HCT116 (cell line): ENCODE measurements at regions of chr14 and their contacts with region 1.

Region 1: DNA sequence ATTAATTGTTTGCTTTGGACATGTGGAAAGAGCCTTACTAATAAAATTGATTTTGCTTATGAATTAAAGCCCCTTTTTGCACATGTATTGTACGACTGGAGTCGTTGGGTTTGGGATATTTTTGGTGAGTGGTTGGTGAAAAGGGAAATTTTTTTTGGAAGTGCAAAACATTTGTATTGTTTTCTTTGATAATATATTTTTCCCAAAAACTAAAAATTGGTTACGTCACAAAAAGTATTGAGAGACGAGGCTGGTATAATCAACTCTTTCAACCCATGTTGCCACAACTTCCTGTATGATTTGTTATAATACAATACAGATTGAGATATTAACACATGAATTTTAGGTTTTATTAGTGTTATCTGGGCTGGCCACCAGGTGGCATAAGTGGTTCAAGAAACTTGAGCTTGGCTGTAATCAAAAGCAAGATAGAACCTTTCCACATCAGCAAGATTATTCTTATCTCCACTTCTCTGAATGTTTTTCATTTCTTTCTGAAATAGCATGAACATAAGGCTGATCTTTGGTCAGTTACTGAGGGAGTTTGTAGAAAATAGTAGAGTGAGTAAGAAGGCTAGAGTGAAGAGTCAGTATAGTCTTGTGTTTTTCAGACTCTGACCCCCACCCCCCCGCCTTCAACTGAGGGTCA is 8.7 kb downstream of the NGDN start:
- DNase-seq: peak; percentile 51
- ATAC-seq: peak; percentile 71
- H3K4me3 ChIP-seq: no peak overlapping the region
- H3K27ac ChIP-seq: no peak overlapping the region
- H3K4me1 ChIP-seq: no peaks in the 10 kb centered on the region
- H3K27me3 ChIP-seq: no peaks in the 10 kb centered on the region
- CTCF ChIP-seq: peak; percentile 63 to 80 (median 66)
- POLR2A ChIP-seq: no peak
- RAD21 ChIP-seq: peak; percentile 76

Region 2: DNA sequence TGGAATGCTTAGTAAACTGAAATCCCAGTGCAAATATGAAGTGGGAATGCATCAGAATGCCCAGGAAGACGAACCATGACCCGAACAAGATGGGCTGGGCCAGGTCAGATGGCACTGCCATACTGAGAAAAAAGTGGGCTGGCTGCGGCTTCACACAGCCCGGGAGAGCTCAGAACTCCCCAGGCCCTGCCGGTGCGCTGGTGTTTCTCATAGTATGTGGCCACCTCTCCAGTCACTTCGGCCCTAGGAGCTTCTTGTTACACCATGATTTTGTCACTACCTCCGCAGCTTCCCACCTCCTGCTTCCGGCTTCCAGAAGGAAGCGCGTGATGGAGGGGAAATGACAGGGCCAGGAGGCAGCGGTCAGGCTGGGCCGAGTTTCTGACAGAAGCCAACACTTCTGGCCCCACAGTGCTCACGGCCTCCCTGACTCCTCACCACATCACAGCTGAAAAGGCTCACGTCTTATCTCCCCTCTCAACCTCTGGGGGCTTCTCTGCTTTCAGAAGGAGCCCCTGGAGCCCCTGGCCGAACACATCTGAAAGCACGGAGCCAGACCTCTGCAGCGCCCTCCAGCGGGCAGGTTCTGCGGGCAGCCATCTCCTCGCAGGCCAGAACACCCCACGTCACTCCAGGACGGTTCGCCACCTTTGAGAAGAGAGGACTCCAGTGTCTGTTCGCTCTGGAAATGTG is 919.9 kb before region 1 on chr14:
- CTCF ChIA-PET with region 1: no interaction called
- POLR2A ChIA-PET with region 1: no interaction called
- RAD21 ChIA-PET with region 1: no interaction called
- intact Hi-C with region 1: no loop called
- DNase-seq: no peak
- ATAC-seq: no peak
- H3K4me3 ChIP-seq: no peak overlapping the region
- H3K27ac ChIP-seq: no peak overlapping the region
- H3K4me1 ChIP-seq: peaks cover 5 to 24% of the 10 kb centered on the region in 2 experiments
- H3K27me3 ChIP-seq: no peaks in the 10 kb centered on the region
- CTCF ChIP-seq: no peak
- POLR2A ChIP-seq: no peak
- RAD21 ChIP-seq: no peak

Region 3: GRCh38 chr14:23539248-23540140 is 61.3 kb after region 1 on chr14:
- CTCF ChIA-PET with region 1: interaction called, 5 read pairs
- POLR2A ChIA-PET with region 1: no interaction called
- RAD21 ChIA-PET with region 1: no interaction called
- intact Hi-C with region 1: loop called (anchors 5 kb)
- DNase-seq: peak; percentile 19
- ATAC-seq: peak; percentile 95
- H3K4me3 ChIP-seq: no peak overlapping the region
- H3K27ac ChIP-seq: no peak overlapping the region
- H3K4me1 ChIP-seq: peaks cover 0 to 9% of the 10 kb centered on the region in 2 experiments; a peak in 2 of 4 replicates
- H3K27me3 ChIP-seq: no peaks in the 10 kb centered on the region
- CTCF ChIP-seq: peak; percentile 42 to 85 (median 80); a peak in 5 of 6 replicates
- POLR2A ChIP-seq: no peak
- RAD21 ChIP-seq: peak; percentile 55

Region 4: GRCh38 chr14:23567192-23568020 is 89.2 kb after region 1 on chr14 and contains the start of gene AP1G2:
- CTCF ChIA-PET with region 1: interaction called, 11 read pairs
- POLR2A ChIA-PET with region 1: no interaction called
- RAD21 ChIA-PET with region 1: interaction called in 1 of 2 experiments, 6 read pairs
- intact Hi-C with region 1: loop called (anchors 1 kb)
- DNase-seq: peak; percentile 73
- ATAC-seq: peak; percentile 89
- H3K4me3 ChIP-seq: peak within 1 kb of the TSS; percentile 85 to 88
- H3K27ac ChIP-seq: peak within 1 kb of the TSS; percentile 86
- H3K4me1 ChIP-seq: peaks cover 26 to 34% of the 10 kb centered on the region in 2 experiments
- H3K27me3 ChIP-seq: no peaks in the 10 kb centered on the region
- CTCF ChIP-seq: no peak
- POLR2A ChIP-seq: peak; percentile 84
- RAD21 ChIP-seq: no peak
- total RNA-seq, gene AP1G2: 155 TPM

Region 5: DNA sequence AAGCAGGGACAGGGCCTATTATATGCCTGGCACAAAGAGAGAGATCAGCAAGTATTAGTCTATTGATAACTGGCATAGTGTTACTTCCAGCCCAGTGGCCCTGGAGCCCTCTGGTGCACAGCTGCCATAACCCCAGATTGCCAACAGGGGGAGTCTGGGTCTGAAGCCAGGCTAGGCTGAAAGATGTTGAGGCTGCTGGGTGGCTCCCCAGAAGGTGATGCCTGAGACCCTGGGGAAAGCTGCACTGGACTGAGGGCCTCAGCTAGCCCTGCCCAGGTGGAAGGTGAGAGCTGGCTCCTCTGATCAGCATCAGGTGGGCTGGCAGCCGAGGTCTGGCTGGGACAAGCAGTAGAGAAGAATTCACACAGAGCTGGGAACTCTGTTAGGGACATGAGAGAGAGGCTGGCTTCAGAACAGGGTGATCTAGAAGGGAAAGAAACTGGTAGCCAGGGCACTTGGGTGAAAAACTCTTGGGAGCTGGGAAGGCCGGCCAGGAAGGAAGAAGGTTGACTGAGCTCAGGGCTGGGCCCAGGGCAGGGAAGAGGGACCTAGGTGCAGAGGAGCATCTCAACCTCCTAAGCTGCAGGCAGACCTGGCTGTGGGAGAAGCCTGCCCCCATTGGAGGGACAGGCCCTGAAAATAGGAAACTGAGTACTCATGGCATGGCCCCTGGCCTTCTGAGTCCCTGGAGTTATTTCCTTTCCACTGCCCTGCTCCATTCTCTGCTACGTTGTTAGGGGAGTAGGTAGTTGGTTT is 1127.4 kb after region 1 on chr14:
- CTCF ChIA-PET with region 1: no interaction called
- POLR2A ChIA-PET with region 1: no interaction called
- RAD21 ChIA-PET with region 1: no interaction called
- intact Hi-C with region 1: no loop called
- DNase-seq: peak; percentile 10
- ATAC-seq: peak; percentile 96
- H3K4me3 ChIP-seq: no peak overlapping the region
- H3K27ac ChIP-seq: no peak overlapping the region
- H3K4me1 ChIP-seq: no peaks in the 10 kb centered on the region
- H3K27me3 ChIP-seq: no peaks in the 10 kb centered on the region
- CTCF ChIP-seq: peak; percentile 27 to 93 (median 79); a peak in 4 of 6 replicates
- POLR2A ChIP-seq: no peak
- RAD21 ChIP-seq: peak; percentile 8; the same call in 1 of the 2 replicates